Activated CD8-positive, alpha-beta memory T cell treated with anti-CD3 and anti-CD28 coated beads, Interleukin-2, amount 10 ng/mL, durations not matched to agents 7 days and 5 days (primary cell): ENCODE measurements at regions of chr9 and their contacts with region 1.

Region 1: DNA sequence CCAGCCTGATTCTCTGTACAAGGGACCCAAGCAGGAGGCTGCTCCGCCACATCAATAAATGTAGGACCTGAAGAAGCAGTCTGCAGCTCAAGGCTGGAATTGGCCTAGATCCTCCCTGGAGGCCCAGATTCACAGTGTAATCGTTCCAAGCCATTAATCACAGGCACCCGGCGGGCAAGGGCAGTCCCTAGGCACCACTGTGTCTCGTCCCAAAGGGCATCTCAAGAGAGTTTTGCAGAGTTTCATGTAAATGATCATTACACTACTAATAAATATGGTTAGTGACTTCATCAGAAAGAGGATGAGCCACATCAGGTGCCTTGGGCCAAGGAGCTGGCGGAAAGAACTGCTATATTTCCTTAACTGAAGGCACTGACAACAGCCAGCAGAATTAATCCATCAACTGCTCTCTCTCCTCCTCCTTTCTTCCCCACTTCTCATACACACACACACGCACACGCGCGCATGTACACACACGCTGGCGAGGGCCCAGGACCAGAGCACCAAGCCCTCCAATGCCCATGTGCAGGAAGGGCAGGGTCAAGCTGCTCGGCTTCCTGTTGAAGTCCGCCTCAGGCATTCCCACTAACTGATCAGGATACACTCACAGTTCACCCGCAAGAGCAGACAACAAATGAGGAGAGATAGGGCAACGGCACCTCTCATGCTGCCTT is 33.9 kb downstream of the GNAQ start:
- DNase-seq: no peak
- ATAC-seq: no peak
- H3K4me3 Mint-ChIP-seq: no peak overlapping the region
- H3K27ac Mint-ChIP-seq: no peak overlapping the region
- H3K4me1 Mint-ChIP-seq: peaks cover 3% of the 10 kb centered on the region
- H3K27me3 Mint-ChIP-seq: no peaks in the 10 kb centered on the region

Region 2: DNA sequence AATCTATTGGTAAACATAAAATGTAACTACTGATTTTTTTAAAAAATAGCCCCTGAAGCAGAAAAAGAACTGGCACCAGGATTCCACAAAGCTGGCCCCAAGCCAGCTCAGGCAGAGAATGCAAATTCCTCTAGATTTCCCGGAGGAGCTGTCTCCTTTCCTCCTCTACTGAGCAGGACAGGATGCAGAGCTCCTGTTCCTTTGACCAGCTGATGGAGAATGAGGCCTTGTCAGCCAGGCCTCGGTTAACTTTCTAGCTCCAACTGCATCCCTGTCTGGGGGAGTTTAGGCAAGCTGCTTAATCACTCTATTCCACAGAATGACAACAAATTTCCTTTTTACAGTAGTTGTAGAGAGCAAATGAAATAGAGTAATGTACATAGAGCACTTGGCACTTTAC is 121.7 kb before region 1 on chr9:
- CTCF ChIA-PET with region 1: no interaction called
- DNase-seq: no peak
- ATAC-seq: no peak
- H3K4me3 Mint-ChIP-seq: no peak overlapping the region
- H3K27ac Mint-ChIP-seq: no peak overlapping the region
- H3K4me1 Mint-ChIP-seq: no peaks in the 10 kb centered on the region
- H3K27me3 Mint-ChIP-seq: no peaks in the 10 kb centered on the region

Region 3: DNA sequence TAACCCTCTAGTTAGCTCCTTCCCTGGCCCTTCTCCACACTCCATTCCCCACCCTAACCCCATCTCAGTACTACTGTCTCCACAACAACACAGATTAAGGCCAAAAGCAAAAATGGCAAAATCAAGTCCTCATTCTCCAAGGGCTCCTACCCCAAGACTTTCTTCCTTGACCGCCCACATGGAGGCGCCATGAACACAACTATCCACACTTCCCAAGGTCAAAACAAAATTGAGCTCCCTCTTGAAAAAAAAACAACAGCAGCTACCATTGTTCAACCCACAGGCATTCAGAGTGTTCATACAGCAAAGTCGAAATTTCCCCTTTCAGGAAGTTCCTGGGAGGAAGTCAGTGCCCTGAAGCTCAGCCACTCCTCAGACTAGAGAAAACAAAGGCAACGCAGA is 20.5 kb before region 1 on chr9:
- CTCF ChIA-PET with region 1: interaction called, 11 read pairs
- DNase-seq: peak; percentile 69
- ATAC-seq: peak; percentile 63
- H3K4me3 Mint-ChIP-seq: no peak overlapping the region
- H3K27ac Mint-ChIP-seq: peak overlapping the region; percentile 47
- H3K4me1 Mint-ChIP-seq: peaks cover 52% of the 10 kb centered on the region
- H3K27me3 Mint-ChIP-seq: no peaks in the 10 kb centered on the region